ENCODE measurements at regions of chr4 and their contacts with region 1.

Region 1: GRCh38 chr4:179486570-179487335 is 2044.5 kb upstream of the AGA start:
- DNase-seq: no peak
- H3K4me3 ChIP-seq: no peak overlapping the region
- H3K27ac ChIP-seq: no peak overlapping the region
- H3K4me1 ChIP-seq: no peaks in the 10 kb centered on the region
- H3K27me3 ChIP-seq: no peaks in the 10 kb centered on the region
- CTCF ChIP-seq: no peak

Region 2: GRCh38 chr4:179472164-179472563 is 14.6 kb before region 1 on chr4:
- CTCF ChIA-PET with region 1: no interaction called
- POLR2A ChIA-PET with region 1: interaction called, 16 read pairs
- intact Hi-C with region 1: no loop called
- DNase-seq: no peak
- H3K4me3 ChIP-seq: no peak overlapping the region
- H3K27ac ChIP-seq: no peak overlapping the region
- H3K4me1 ChIP-seq: no peaks in the 10 kb centered on the region
- H3K27me3 ChIP-seq: no peaks in the 10 kb centered on the region
- CTCF ChIP-seq: no peak

Region 3: DNA sequence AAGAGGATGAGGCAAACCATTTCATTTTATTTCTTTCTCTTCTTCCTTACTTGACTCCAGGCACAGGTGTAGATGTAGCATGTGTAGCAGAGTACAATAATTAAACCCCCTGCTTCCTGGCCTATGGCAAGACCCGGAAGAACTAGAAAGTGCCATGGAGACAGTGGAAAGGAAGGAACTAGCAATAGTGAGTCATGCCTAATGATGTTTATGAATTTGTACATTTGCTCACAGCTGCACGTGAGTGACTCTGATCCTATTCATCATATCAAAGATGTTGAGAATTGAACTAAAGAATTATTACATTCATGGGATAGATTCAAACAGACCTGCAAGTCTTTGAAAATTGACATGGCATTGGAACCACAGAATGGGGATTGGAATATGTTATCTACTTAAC is 522.6 kb after region 1 on chr4:
- CTCF ChIA-PET with region 1: no interaction called
- POLR2A ChIA-PET with region 1: no interaction called
- intact Hi-C with region 1: no loop called
- DNase-seq: no peak
- H3K4me3 ChIP-seq: no peak overlapping the region
- H3K27ac ChIP-seq: no peak overlapping the region
- H3K4me1 ChIP-seq: no peaks in the 10 kb centered on the region
- H3K27me3 ChIP-seq: no peaks in the 10 kb centered on the region
- CTCF ChIP-seq: no peak